HCT116 (cell line): ENCODE measurements at regions of chr13 and their contacts with region 1.

Region 1: GRCh38 chr13:54387607-54388006 is 1359.0 kb downstream of the OLFM4 start:
- DNase-seq: no peak
- ATAC-seq: no peak
- H3K4me3 ChIP-seq: no peak overlapping the region
- H3K27ac ChIP-seq: no peak overlapping the region
- H3K4me1 ChIP-seq: no peaks in the 10 kb centered on the region
- H3K27me3 ChIP-seq: no peaks in the 10 kb centered on the region
- CTCF ChIP-seq: no peak
- POLR2A ChIP-seq: no peak
- RAD21 ChIP-seq: no peak

Region 2: DNA sequence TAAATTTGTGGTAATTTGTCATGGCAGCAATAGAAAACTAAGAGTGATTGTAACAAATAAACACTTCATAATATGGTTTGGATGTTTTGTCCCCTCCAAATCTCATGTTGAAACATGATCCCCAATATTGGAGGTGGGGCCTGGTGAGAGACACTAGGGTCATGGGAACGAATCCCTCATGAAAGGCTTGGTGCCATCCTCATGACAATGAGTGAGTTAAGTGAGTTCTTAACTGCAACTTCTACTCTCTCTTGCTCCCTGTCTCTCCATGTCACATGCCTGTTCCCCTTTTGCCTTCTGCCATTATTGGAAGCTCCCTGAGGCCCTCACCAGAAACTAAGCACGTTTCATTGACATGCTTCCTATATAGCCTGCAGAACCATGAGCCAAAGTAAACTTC is 125.8 kb before region 1 on chr13:
- CTCF ChIA-PET with region 1: no interaction called
- POLR2A ChIA-PET with region 1: no interaction called
- RAD21 ChIA-PET with region 1: no interaction called
- intact Hi-C with region 1: loop called (anchors 10 kb)
- DNase-seq: no peak
- ATAC-seq: no peak
- H3K4me3 ChIP-seq: no peak overlapping the region
- H3K27ac ChIP-seq: no peak overlapping the region
- H3K4me1 ChIP-seq: no peaks in the 10 kb centered on the region
- H3K27me3 ChIP-seq: no peaks in the 10 kb centered on the region
- CTCF ChIP-seq: no peak
- POLR2A ChIP-seq: no peak
- RAD21 ChIP-seq: no peak

Region 3: DNA sequence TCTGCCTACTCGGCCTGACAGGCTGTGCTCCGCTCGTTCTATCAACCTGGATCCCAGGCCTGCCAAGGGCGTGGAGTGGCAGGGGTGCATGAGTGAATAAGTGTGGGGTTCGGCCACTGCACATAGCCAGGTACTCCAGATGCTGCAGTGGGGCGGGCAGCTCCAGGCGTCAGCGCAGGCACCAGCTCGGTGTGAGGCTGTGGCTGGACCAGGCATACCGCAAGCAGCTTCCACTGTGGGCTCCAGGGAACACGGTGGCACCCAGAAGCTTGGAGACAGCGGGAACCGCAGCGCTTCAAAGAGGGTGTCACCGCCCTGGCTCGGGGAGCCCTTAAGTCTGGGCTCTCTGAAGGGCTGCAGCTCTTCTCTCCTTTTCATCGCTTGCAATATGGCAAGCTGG is 271.2 kb after region 1 on chr13:
- CTCF ChIA-PET with region 1: no interaction called
- POLR2A ChIA-PET with region 1: no interaction called
- RAD21 ChIA-PET with region 1: no interaction called
- intact Hi-C with region 1: no loop called
- DNase-seq: no peak
- ATAC-seq: no peak
- H3K4me3 ChIP-seq: no peak overlapping the region
- H3K27ac ChIP-seq: no peak overlapping the region
- H3K4me1 ChIP-seq: no peaks in the 10 kb centered on the region
- H3K27me3 ChIP-seq: no peaks in the 10 kb centered on the region
- CTCF ChIP-seq: no peak
- POLR2A ChIP-seq: no peak
- RAD21 ChIP-seq: no peak